Activated CD4-positive, alpha-beta T cell treated with anti-CD3 and anti-CD28 coated beads, Interleukin-2, amount 10 ng/mL, durations not matched to agents 24 days and 14 days (primary cell): ENCODE measurements at regions of chr12 and their contacts with region 1.

Region 1: GRCh38 chr12:122421821-122422729 is at the start of gene CLIP1:
- DNase-seq: peak; percentile 91
- H3K4me3 Mint-ChIP-seq: peak within 1 kb of the TSS; percentile 89
- H3K27ac Mint-ChIP-seq: peak within 1 kb of the TSS; percentile 90
- H3K4me1 Mint-ChIP-seq: peaks cover 28% of the 10 kb centered on the region
- H3K27me3 Mint-ChIP-seq: no peaks in the 10 kb centered on the region
- total RNA-seq, gene CLIP1: 60.8 and 66.1 TPM in 2 replicates

Region 2: DNA sequence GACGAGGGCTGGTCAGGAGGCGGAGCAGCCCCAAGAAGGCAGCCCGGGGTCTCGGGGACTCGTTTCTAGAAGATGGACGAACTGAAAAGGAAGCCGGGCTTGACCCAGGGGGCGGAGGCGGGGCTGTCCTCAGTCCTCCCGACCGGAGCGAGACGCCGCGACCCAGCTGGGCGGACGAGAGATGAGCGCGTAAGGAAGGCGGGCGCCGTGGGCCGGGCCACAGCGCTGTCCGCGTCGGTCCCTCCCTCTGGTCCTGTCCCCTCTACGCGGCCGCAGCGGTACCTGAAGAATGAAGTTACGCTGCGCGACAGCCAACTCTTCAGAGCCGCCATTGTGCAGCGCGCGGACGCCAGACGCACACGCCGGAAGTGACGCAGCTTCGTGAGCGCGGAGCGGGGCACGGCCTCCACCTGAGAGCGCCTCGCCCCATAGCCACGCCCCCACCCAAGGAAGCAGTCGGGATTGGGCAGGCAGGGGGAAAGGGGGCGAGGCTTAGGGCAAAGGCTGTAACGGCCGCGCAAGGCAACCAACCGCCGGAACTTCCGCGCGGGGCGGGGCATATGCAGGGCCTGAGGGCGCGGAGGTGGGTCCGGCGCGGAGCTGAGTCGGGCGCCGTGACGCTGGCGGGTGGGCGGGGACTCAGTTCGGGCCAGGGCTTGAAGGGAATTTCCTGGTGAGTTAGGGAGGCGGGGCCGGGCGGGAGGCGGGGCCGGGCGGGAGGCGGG is 196.2 kb before region 1 on chr12 and contains the start of gene DIABLO:
- intact Hi-C with region 1: no loop called
- DNase-seq: peak; percentile 100
- H3K4me3 Mint-ChIP-seq: peak within 1 kb of the TSS; percentile 95
- H3K27ac Mint-ChIP-seq: peak within 1 kb of the TSS; percentile 94
- H3K4me1 Mint-ChIP-seq: peaks cover 31% of the 10 kb centered on the region
- H3K27me3 Mint-ChIP-seq: no peaks in the 10 kb centered on the region
- total RNA-seq, gene DIABLO: 59.4 and 61.0 TPM in 2 replicates

Region 3: GRCh38 chr12:122399592-122400373 is 22.3 kb before region 1 on chr12:
- intact Hi-C with region 1: loop called (anchors 1 kb)
- DNase-seq: peak; percentile 86
- H3K4me3 Mint-ChIP-seq: peak overlapping the region; percentile 71
- H3K27ac Mint-ChIP-seq: peak overlapping the region; percentile 87
- H3K4me1 Mint-ChIP-seq: peaks cover 34% of the 10 kb centered on the region
- H3K27me3 Mint-ChIP-seq: no peaks in the 10 kb centered on the region

Region 4: DNA sequence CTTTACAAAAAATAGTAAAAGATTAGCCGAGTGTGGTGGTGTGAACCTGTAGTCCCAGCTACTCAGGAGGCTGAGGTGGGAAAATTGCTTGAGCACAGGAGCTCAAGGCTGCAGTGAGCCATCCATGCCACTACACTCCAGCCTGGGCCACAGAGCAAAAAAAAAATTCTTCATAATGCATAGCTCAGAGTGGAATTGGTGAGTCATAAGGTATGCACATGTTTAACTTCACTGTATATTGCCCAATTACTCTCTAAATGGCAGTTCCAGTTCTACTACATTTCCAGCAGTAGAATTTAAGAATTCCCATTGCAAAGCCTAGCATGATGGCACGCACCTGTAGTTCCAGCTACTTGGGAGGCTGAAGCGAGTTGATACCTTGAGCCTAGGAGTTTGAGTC is 27.3 kb after region 1 on chr12:
- intact Hi-C with region 1: loop called (anchors 1 kb)
- DNase-seq: no peak
- H3K4me3 Mint-ChIP-seq: no peak overlapping the region
- H3K27ac Mint-ChIP-seq: no peak overlapping the region
- H3K4me1 Mint-ChIP-seq: peaks cover 29% of the 10 kb centered on the region
- H3K27me3 Mint-ChIP-seq: peaks cover 4% of the 10 kb centered on the region

Region 5: DNA sequence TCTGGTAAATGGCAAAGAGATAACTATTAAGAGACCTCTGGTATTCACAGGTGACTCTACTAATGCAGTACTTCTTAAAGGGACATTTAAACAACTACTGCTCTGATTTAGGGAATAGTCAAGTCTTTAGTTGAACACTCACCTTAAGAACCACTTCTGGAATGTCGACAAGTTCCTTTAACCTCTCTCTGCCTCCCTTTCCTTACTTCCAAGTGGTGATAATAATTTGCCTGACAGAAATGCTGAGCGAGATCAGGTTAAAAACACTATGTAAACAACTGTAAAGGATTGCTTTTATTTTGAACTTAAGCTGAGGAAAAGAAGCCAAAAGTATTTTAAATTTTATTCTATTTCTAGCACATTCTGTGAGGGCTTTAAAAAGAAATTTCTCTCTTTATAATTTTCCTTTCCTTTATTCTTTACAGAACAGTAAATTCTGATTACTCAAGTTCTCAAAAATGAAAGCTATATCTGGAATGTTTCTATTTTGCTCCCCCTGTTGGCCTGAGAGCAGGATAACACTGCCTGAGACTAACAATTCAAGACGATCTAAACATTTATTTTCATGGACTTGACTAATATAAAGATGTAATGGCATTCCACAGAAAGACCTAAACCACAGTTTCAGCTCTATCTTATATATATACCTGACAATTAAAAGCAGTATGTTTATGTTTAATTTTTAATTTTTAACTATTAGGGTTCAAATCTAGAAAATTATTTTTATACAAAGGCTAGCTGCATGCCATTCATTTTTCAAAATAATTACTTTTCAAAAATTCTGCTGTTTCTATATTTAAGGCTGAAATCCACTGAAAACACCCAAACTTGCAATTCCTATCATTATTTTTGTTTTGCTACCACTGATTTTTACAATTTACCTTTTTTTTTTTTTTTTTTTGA is 49.5 kb after region 1 on chr12:
- intact Hi-C with region 1: loop called (anchors 1 kb)
- DNase-seq: peak; percentile 76
- H3K4me3 Mint-ChIP-seq: no peak overlapping the region
- H3K27ac Mint-ChIP-seq: no peak overlapping the region
- H3K4me1 Mint-ChIP-seq: peaks cover 16% of the 10 kb centered on the region
- H3K27me3 Mint-ChIP-seq: no peaks in the 10 kb centered on the region